Caco-2 (cell line): ENCODE measurements at regions of chr2 and their contacts with region 1.

Region 1: GRCh38 chr2:102240640-102241370 is 54.0 kb downstream of the IL1RL2 start:
- DNase-seq: peak; percentile 87 to 92
- H3K4me3 ChIP-seq: no peak overlapping the region
- H3K4me3 Mint-ChIP-seq: no peak overlapping the region
- H3K27ac Mint-ChIP-seq: no peak overlapping the region
- H3K4me1 ChIP-seq: peaks cover 5% of the 10 kb centered on the region; the same call in 1 of the 2 replicates
- H3K4me1 Mint-ChIP-seq: peaks cover 6% of the 10 kb centered on the region
- H3K27me3 ChIP-seq: no peaks in the 10 kb centered on the region
- H3K27me3 Mint-ChIP-seq: no peaks in the 10 kb centered on the region
- CTCF ChIP-seq: peak; percentile 93 to 98

Region 2: DNA sequence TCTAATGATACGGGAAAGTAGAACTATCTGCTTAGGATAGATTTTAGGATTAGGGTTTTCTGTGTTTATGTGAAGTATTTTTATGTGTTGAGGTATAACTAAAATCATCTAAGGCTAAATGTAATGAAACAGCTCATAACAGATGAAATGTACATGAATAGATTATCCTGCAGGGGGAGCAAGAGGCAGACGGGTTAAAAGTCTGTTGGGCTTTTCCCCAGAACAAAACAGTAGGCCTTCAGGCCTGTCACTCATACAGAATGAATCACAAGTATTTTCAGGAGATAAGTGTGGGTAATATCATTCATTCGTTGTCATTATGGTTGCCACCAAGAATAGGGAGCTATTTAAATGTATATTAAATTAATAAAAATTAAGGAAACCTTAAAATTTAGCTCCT is 356.9 kb before region 1 on chr2:
- CTCF ChIA-PET with region 1: interaction called, 21 read pairs
- POLR2A ChIA-PET with region 1: no interaction called
- intact Hi-C with region 1: loop called (anchors 1 kb)
- DNase-seq: peak in 1 of 2 experiments; percentile 62
- H3K4me3 ChIP-seq: no peak overlapping the region
- H3K4me3 Mint-ChIP-seq: no peak overlapping the region
- H3K27ac Mint-ChIP-seq: no peak overlapping the region
- H3K4me1 ChIP-seq: no peaks in the 10 kb centered on the region
- H3K4me1 Mint-ChIP-seq: peaks cover 7% of the 10 kb centered on the region
- H3K27me3 ChIP-seq: no peaks in the 10 kb centered on the region
- H3K27me3 Mint-ChIP-seq: no peaks in the 10 kb centered on the region
- CTCF ChIP-seq: peak; percentile 63 to 73

Region 3: GRCh38 chr2:101998896-101999789 is 241.7 kb before region 1 on chr2:
- CTCF ChIA-PET with region 1: interaction called, 26 read pairs
- POLR2A ChIA-PET with region 1: interaction called, 5 read pairs
- intact Hi-C with region 1: no loop called
- DNase-seq: peak; percentile 77 to 82
- H3K4me3 ChIP-seq: peak overlapping the region; percentile 21
- H3K4me3 Mint-ChIP-seq: peak overlapping the region; percentile 61
- H3K27ac Mint-ChIP-seq: peak overlapping the region; percentile 58
- H3K4me1 ChIP-seq: peaks cover 49% of the 10 kb centered on the region
- H3K4me1 Mint-ChIP-seq: peaks cover 7% of the 10 kb centered on the region
- H3K27me3 ChIP-seq: no peaks in the 10 kb centered on the region
- H3K27me3 Mint-ChIP-seq: no peaks in the 10 kb centered on the region
- CTCF ChIP-seq: peak in 1 of 2 experiments; percentile 24

Region 4: DNA sequence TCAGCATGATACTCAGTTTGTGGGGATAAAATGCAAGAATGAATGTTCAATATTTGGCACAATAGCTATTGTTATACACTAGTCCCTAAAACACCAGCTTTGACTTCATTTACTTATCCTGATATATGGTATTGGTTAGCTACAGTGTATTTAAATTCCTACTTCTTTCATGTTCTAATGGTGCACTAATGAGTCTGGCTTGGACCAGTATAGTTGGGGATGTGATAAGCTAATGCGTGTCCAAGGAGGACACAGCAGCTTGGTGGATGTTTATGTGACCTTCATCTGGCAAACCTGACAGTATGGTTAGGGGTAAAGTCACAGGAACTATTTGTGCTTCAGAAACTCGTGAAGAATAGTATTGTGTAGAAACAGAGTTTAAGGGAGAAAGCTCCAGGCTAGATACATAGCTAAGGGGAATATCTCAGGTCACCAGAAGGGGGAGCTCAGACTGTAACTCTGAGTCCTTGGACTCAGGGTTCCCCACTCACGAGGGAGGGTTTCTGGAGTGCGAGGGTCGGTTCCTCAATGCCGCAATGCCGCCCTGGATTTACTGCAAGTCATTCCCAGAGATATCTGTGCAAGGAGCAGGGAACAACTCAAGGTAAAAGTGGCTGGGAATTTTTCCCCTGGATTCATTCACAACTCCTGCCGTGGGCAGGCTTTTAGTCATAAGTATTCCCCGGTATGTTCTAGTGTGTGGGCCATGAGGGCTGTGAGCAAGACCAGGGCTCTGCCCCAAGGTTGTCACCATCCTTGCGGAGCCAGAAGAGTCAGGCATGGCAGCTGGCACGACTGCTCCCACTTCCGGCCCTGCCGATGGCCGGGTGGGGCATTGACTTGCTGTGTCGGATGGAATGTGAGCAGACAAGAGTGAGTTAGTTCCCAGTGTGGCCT is 234.6 kb before region 1 on chr2:
- CTCF ChIA-PET with region 1: interaction called, 65 read pairs
- POLR2A ChIA-PET with region 1: no interaction called
- intact Hi-C with region 1: loop called (anchors 1 kb)
- DNase-seq: peak; percentile 65 to 70
- H3K4me3 ChIP-seq: no peak overlapping the region
- H3K4me3 Mint-ChIP-seq: no peak overlapping the region
- H3K27ac Mint-ChIP-seq: no peak overlapping the region
- H3K4me1 ChIP-seq: peaks cover 17% of the 10 kb centered on the region
- H3K4me1 Mint-ChIP-seq: no peaks in the 10 kb centered on the region
- H3K27me3 ChIP-seq: no peaks in the 10 kb centered on the region
- H3K27me3 Mint-ChIP-seq: no peaks in the 10 kb centered on the region
- CTCF ChIP-seq: peak; percentile 71 to 73

Region 5: GRCh38 chr2:102020596-102021181 is 220.1 kb before region 1 on chr2:
- CTCF ChIA-PET with region 1: interaction called, 41 read pairs
- POLR2A ChIA-PET with region 1: no interaction called
- intact Hi-C with region 1: loop called (anchors 1 kb)
- DNase-seq: peak; percentile 88 to 90
- H3K4me3 ChIP-seq: no peak overlapping the region
- H3K4me3 Mint-ChIP-seq: no peak overlapping the region
- H3K27ac Mint-ChIP-seq: peak overlapping the region; percentile 35
- H3K4me1 ChIP-seq: peaks cover 5% of the 10 kb centered on the region
- H3K4me1 Mint-ChIP-seq: peaks cover 5% of the 10 kb centered on the region
- H3K27me3 ChIP-seq: no peaks in the 10 kb centered on the region
- H3K27me3 Mint-ChIP-seq: no peaks in the 10 kb centered on the region
- CTCF ChIP-seq: peak; percentile 97 to 98

Region 6: DNA sequence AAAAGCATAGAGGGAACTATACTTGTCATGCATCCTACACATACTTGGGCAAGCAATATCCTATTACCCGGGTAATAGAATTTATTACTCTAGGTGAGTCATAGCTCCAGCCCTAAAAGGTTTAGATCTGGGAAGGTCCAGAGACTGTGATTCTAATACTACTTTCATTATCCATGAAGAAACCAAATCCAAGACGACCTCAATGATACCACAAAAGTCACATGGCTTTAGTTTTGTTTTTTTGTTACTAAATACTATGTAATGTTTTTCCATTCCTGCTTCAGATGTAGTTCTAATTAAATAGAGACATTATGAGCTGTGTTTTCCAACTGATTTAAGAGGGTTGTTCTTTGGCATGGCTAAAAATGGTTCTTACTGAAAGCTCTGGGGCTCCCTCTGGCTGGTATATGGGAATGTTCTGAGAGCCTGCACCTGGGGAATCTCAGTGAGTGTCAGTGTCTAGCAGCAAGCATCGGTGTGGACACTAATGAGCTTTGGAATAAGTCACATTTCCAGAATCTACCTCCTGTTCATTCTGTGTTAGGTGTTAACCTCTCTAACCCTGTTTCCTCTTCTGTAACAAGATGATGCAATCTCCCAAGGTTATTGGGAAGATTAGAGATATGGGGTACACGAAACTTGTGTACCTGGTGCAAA is 74.5 kb before region 1 on chr2:
- CTCF ChIA-PET with region 1: interaction called, 24 read pairs
- POLR2A ChIA-PET with region 1: no interaction called
- intact Hi-C with region 1: loop called (anchors 1 kb)
- DNase-seq: peak in 1 of 2 experiments; percentile 58
- H3K4me3 ChIP-seq: no peak overlapping the region
- H3K4me3 Mint-ChIP-seq: no peak overlapping the region
- H3K27ac Mint-ChIP-seq: no peak overlapping the region
- H3K4me1 ChIP-seq: peaks cover 11% of the 10 kb centered on the region
- H3K4me1 Mint-ChIP-seq: peaks cover 2% of the 10 kb centered on the region
- H3K27me3 ChIP-seq: no peaks in the 10 kb centered on the region
- H3K27me3 Mint-ChIP-seq: no peaks in the 10 kb centered on the region
- CTCF ChIP-seq: peak; percentile 60 to 80

Region 7: DNA sequence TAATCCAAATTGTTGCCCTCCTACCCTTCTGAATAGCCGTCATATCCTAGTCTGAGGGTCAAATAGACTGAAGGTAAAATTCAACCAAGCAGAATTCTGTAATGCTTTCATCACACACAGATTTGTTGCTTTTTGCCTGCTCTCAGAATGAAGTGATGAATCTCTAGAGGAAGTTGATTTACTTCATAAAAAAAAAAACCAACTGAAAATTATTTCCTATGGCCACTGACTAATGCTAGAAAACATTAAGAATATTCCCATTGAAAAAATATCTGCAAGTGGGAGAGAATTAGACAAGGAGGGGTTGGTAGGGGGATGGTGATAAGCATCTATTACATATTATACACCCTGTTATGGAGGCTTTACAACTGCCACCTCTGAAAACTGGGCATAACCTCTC is 56.2 kb before region 1 on chr2:
- CTCF ChIA-PET with region 1: interaction called, 3 read pairs
- POLR2A ChIA-PET with region 1: no interaction called
- intact Hi-C with region 1: loop called (anchors 1 kb)
- DNase-seq: no peak
- H3K4me3 ChIP-seq: no peak overlapping the region
- H3K4me3 Mint-ChIP-seq: no peak overlapping the region
- H3K27ac Mint-ChIP-seq: no peak overlapping the region
- H3K4me1 ChIP-seq: 0 out of 2 replicates have a peak, but pooled peaks cover 4% of the 10 kb centered on the region
- H3K4me1 Mint-ChIP-seq: no peaks in the 10 kb centered on the region
- H3K27me3 ChIP-seq: no peaks in the 10 kb centered on the region
- H3K27me3 Mint-ChIP-seq: no peaks in the 10 kb centered on the region
- CTCF ChIP-seq: no peak